ENCODE measurements at regions of chr2 and their contacts with region 1.

Region 1: GRCh38 chr2:189580658-189581353 is at the start of gene SLC40A1:
- DNase-seq: peak; percentile 67
- H3K4me3 Mint-ChIP-seq: peak within 1 kb of the TSS; percentile 85
- H3K27ac Mint-ChIP-seq: peak within 1 kb of the TSS; percentile 82
- H3K4me1 Mint-ChIP-seq: peaks cover 44% of the 10 kb centered on the region
- H3K27me3 Mint-ChIP-seq: peaks cover 5% of the 10 kb centered on the region
- total RNA-seq, gene SLC40A1: 3.8 to 4.1 TPM

Region 2: DNA sequence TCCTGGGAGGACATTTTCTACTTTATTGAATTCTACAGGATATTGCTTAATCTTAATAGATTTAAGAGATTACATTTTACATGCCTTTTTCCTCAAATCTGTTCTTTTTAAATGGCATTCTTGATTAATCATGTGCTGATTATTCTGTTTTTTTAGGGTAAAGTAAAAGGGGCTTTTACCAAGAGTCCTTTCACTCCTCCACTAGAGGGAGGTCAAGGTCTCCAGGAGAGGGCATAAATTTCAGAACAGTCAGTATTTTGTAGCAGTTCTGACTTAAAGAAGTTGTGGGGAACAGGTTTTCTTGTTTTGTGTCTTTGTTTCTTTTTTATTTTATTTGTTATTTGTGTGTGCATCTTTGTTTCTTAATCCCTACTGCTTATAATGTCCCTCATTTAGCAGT is 114.1 kb before region 1 on chr2:
- CTCF ChIA-PET with region 1: no interaction called
- intact Hi-C with region 1: loop called (anchors 5 kb)
- DNase-seq: no peak
- H3K4me3 Mint-ChIP-seq: no peak overlapping the region
- H3K27ac Mint-ChIP-seq: no peak overlapping the region
- H3K4me1 Mint-ChIP-seq: no peaks in the 10 kb centered on the region
- H3K27me3 Mint-ChIP-seq: no peaks in the 10 kb centered on the region

Region 3: DNA sequence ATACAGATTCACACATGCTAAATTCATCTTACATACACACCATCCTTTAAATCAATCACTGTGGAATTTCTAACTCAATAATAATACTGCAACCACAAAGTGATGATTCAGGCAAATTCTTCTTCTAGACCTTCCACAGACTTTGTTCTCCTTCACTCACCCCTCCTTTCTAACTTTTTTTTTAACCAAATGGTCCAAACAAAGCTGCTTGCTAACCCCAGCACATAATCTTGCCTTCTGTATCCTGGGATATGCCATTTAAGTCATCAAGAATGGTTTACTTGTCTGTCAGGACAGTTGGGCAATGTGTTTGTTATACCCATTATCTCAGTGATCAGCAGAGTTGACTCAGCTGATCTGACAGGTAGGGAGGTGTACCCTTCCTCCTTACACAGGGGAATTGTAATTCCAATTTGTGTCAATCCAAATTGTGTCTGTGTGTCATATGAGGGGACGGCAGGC is 10.2 kb before region 1 on chr2:
- CTCF ChIA-PET with region 1: no interaction called
- intact Hi-C with region 1: loop called (anchors 1 kb)
- DNase-seq: no peak
- H3K4me3 Mint-ChIP-seq: no peak overlapping the region
- H3K27ac Mint-ChIP-seq: no peak overlapping the region
- H3K4me1 Mint-ChIP-seq: peaks cover 45% of the 10 kb centered on the region
- H3K27me3 Mint-ChIP-seq: no peaks in the 10 kb centered on the region

Region 4: DNA sequence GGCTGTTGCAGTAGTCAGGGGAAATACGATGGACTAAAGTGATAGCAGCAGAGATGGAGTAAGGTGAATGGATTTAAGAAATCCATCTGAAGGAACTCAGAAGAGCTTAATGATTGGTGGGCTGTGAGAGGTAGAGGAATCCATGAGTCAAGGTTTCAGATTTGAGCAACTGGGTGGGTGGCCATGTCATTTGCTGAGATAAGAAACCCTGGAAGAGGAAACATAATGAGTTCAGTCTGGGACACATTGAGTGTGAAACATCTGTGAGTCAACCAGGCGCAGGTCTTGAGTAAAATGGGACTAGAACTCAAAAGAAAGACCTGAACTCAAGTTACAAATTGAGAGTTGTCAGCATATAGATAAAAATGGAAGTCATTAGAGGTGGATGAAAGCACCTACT is 60.8 kb after region 1 on chr2:
- CTCF ChIA-PET with region 1: no interaction called
- intact Hi-C with region 1: loop called (anchors 5 kb)
- DNase-seq: peak; percentile 71
- H3K4me3 Mint-ChIP-seq: no peak overlapping the region
- H3K27ac Mint-ChIP-seq: peak overlapping the region; percentile 10
- H3K4me1 Mint-ChIP-seq: peaks cover 25% of the 10 kb centered on the region
- H3K27me3 Mint-ChIP-seq: no peaks in the 10 kb centered on the region

Region 5: DNA sequence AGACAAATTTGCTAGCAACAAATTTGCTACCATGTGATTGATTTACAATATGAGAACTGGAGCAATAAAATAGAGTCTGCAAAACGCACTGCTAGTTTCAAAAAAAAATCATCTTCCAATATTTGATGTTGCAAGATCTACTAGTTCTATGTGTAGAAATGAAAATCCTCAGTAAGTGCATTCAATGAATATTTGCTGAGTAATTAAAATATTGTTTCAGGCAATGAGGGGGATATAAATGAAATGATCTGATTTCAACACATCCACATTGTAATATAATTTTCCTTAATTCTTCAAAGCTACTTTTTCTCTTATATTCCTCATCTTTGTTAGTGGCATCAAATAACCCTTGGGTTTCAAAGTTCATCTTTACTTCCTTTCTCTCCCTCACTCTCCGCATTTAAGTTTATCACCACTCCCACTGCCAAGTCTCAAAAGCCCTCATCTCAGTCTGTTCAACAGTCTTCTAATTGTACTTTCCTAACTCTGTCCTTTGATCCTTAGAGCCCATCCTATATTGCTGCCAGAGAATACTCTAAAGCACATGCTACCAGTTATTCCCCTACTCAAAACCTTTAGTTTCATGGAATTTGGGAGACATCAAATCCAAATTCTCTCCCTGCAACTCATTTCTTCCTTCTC is 175.6 kb after region 1 on chr2:
- CTCF ChIA-PET with region 1: no interaction called
- intact Hi-C with region 1: no loop called
- DNase-seq: no peak
- H3K4me3 Mint-ChIP-seq: no peak overlapping the region
- H3K27ac Mint-ChIP-seq: no peak overlapping the region
- H3K4me1 Mint-ChIP-seq: peaks cover under 1% of the 10 kb centered on the region
- H3K27me3 Mint-ChIP-seq: no peaks in the 10 kb centered on the region